CD4-positive, alpha-beta T cell (primary cell): ENCODE measurements at regions of chr1 and their contacts with region 1.

Region 1: GRCh38 chr1:111399792-111400610 is 27.5 kb downstream of the OVGP1 start:
- DNase-seq: peak in 12 of 14 experiments; percentile 7 to 69 (median 24)
- ATAC-seq: no peak
- H3K4me3 ChIP-seq: no peak overlapping the region
- H3K4me3 Mint-ChIP-seq: no peak overlapping the region
- H3K27ac ChIP-seq: no peak overlapping the region
- H3K27ac Mint-ChIP-seq: no peak overlapping the region
- H3K4me1 ChIP-seq: no peaks in the 10 kb centered on the region
- H3K4me1 Mint-ChIP-seq: peaks cover 40% of the 10 kb centered on the region
- H3K27me3 ChIP-seq: no peaks in the 10 kb centered on the region
- H3K27me3 Mint-ChIP-seq: no peaks in the 10 kb centered on the region
- CTCF ChIP-seq: peak; percentile 84

Region 2: GRCh38 chr1:111346089-111346885 is 53.7 kb before region 1 on chr1:
- CTCF ChIA-PET with region 1: interaction called, 3 read pairs
- POLR2A ChIA-PET with region 1: interaction called, 3 read pairs
- intact Hi-C with region 1: loop called in 1 of 2 experiments (anchors 5 kb)
- DNase-seq: peak; percentile 76 to 97 (median 86)
- ATAC-seq: peak; percentile 88
- H3K4me3 ChIP-seq: peak overlapping the region; percentile 71
- H3K4me3 Mint-ChIP-seq: peak overlapping the region; percentile 88
- H3K27ac ChIP-seq: peak overlapping the region; percentile 43 to 73
- H3K27ac Mint-ChIP-seq: peak overlapping the region; percentile 85
- H3K4me1 ChIP-seq: peaks cover 14% of the 10 kb centered on the region
- H3K4me1 Mint-ChIP-seq: peaks cover 29% of the 10 kb centered on the region
- H3K27me3 ChIP-seq: no peaks in the 10 kb centered on the region
- H3K27me3 Mint-ChIP-seq: no peaks in the 10 kb centered on the region
- CTCF ChIP-seq: peak; percentile 30